Panc1 (cell line): ENCODE measurements at regions of chr10 and their contacts with region 1.

Region 1: GRCh38 chr10:6151087-6151977 is 51.4 kb upstream of the PFKFB3 start:
- DNase-seq: no peak
- ATAC-seq: peak; percentile 91
- H3K4me3 ChIP-seq: no peak overlapping the region
- H3K27ac ChIP-seq: no peak overlapping the region
- H3K4me1 ChIP-seq: no peaks in the 10 kb centered on the region; the same call in none of the 2 replicates
- H3K27me3 ChIP-seq: no peaks in the 10 kb centered on the region
- CTCF ChIP-seq: peak; percentile 80

Region 2: DNA sequence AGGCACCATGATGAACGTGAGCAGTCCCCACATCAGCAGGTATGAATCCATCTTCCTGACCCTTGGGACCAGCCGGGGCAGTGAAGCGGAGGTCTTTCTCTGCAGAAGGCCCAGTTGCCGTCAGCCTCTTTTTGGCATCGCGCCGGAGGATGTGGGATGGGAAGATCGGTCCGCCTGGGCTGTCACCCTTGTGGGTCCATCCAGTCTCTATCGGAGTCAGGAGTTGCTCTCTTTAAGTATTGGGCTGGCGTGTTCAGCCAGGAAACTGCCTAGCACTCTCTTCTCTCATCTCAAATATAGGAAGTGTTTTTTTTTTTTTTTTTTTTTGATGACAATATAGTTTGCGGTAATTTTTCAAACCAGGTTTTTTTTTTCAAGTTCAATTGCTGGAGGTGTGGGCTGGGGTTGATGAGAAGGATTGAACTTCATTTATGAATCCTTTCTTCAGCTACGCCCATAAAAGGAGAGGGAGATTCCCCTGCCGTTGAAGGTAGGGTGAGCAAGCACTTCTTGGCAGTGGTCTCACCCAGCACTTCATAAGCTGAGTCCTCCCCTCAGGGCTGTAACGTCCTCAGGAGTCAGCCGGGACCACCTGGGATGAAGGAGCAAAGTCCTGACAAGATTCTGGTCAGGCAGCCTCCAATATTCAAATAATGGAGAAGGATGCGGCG is 89.1 kb before region 1 on chr10 and contains the start of gene IL2RA:
- CTCF ChIA-PET with region 1: no interaction called
- POLR2A ChIA-PET with region 1: no interaction called
- in situ Hi-C with region 1: no loop called
- intact Hi-C with region 1: no loop called
- DNase-seq: no peak
- ATAC-seq: no peak
- H3K4me3 ChIP-seq: no peak within 1 kb of the TSS
- H3K27ac ChIP-seq: no peak within 1 kb of the TSS
- H3K4me1 ChIP-seq: no peaks in the 10 kb centered on the region
- H3K27me3 ChIP-seq: no peaks in the 10 kb centered on the region; the same call in 1 of the 2 replicates
- CTCF ChIP-seq: no peak
- total RNA-seq, gene IL2RA: 0.33 TPM

Region 3: GRCh38 chr10:6088721-6089390 is 62.5 kb before region 1 on chr10 and contains the start of gene RBM17:
- CTCF ChIA-PET with region 1: no interaction called
- POLR2A ChIA-PET with region 1: no interaction called
- in situ Hi-C with region 1: no loop called
- intact Hi-C with region 1: no loop called
- DNase-seq: peak; percentile 84
- ATAC-seq: peak; percentile 95
- H3K4me3 ChIP-seq: peak within 1 kb of the TSS; percentile 80 to 93
- H3K27ac ChIP-seq: peak within 1 kb of the TSS; percentile 83
- H3K4me1 ChIP-seq: peaks cover 16% of the 10 kb centered on the region
- H3K27me3 ChIP-seq: peaks cover 3% of the 10 kb centered on the region; the same call in 1 of the 2 replicates
- CTCF ChIP-seq: peak; percentile 100
- total RNA-seq, gene RBM17: 65.4 TPM

Region 4: DNA sequence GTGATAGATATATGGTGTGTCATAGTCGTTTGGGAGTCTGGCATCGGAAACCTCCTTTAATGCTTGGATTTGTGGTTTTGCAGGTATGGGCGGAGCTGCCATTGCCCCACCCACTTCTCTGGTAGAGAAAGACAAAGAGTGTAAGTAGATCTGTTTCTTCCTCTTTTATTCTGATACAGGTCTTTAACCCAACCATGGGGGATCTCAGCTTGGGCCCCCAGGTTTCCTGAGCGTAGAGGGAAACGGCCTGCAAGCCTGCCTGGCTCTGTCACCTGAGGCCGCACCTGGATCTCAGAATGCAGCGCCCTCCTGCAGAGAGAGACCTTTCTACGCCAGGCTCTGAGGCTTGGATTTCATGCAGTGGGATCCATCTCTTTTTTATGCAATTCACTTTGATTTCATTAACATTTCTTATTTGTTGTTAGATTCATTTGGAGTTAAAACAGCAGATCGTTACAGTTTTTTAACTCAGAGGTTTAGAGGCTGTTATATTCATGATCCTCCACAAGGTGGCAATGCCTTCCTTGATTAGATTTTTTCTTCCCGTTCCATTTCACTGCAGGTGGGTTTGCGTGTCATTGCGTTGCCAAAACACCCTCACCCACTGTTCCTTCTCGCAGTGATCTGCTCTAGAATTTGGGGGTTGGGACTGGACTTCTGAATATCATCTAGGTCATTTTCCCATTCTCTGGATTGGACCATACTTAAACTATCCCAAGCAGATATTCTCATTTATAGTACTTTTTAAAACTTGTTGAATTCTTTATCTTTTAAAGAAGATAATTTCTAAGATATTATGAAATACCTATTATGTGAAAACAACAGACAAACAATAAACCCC is 42.5 kb before region 1 on chr10:
- CTCF ChIA-PET with region 1: no interaction called
- POLR2A ChIA-PET with region 1: no interaction called
- in situ Hi-C with region 1: no loop called
- intact Hi-C with region 1: loop called (anchors 10 kb)
- DNase-seq: peak; percentile 20
- ATAC-seq: no peak
- H3K4me3 ChIP-seq: no peak overlapping the region
- H3K27ac ChIP-seq: no peak overlapping the region
- H3K4me1 ChIP-seq: no peaks in the 10 kb centered on the region
- H3K27me3 ChIP-seq: no peaks in the 10 kb centered on the region
- CTCF ChIP-seq: peak; percentile 76